Posterior cingulate gyrus (tissue), 11 donors: ENCODE measurements at regions of chr17 and their contacts with region 1.

Region 1: DNA sequence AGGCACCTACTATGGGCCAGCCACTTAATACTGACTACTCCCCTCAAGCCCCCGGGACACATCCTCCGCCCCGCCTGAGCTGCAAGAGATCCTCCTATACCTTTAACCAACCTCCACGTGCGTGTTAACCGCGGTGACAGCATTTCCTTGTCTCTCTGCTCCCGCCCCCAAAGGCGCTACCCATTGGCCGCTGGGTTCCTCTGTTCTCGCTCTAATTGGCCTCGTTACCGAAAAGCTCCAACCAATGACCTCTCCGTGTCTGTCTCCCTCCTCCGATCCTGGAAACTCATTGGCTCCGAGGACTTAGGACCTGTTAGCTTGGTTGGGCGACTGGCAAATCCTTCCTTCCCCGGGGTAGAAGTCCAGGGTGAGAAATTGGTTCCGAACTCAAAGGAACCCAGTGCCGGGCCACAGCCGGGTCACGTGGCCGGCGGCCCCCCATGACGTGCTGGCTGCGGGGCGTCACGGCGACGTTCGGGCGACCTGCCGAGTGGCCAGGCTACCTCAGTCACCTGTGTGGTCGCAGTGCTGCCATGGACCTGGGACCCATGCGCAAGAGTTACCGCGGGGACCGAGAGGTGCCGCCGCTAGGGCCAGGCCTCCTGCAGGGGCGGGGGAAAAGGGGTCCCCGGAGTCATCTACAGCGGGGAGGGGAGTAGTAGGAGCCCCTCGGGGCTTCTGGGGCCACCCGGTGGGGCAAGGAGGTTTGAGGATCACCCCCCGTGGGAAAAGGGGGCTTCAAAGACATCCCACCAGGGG is at the start of gene PNPO:
- DNase-seq: peak; percentile 88 to 99 (median 96)

Region 2: GRCh38 chr17:47884905-47885733 is 56.3 kb before region 1 on chr17:
- intact Hi-C with region 1: no loop called
- DNase-seq: peak in 1 of 10 donors; percentile 56

Region 3: DNA sequence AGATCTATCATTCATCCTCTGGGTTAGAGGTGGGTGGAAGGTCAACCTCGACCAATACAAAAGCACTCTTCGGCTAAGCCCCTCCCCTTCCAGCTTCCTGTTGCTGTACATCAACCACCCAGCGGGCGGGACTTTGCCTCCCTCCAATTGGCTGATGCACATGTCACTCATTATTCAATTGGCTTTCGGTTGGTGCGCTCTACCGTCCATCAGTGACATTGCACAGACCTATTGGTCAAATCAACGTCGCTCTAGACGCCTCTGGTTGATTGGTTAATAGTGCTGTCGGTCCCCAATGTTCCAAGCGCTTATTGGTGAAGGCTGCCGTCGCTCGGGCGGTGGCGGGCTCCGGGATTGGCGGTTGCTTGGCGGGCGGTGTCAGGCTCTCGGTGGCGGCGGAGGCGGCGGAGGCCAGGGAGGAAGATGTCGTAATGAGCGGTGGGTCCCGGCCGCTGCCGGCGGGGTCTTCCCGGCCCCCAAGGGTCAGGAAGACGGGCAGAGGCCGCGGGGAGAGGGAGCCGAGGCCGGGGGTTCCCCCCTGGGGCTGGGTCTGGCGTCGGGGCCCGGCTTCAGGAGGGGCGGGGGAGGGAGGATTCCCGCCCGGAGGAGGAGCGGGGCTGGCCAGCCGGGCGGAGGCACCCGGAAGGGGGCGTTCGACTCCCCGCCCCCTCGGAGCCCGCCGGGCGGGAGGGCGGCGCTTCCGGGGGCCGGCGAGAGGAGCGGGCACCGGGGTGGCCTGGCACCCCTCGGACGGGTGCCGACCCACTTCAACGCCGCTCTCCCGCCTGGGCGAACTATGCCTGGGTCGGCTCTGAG is 45.4 kb before region 1 on chr17 and contains the start of gene SP2:
- intact Hi-C with region 1: loop called (anchors 5 kb)
- DNase-seq: peak; percentile 97 to 100 (median 98)

Region 4: GRCh38 chr17:47999582-47999981 is 58.2 kb after region 1 on chr17:
- intact Hi-C with region 1: loop called (anchors 2 kb)
- DNase-seq: no peak